ENCODE measurements at regions of chr3 and their contacts with region 1.

Region 1: GRCh38 chr3:16290007-16290826 is 25.2 kb downstream of the OXNAD1 start:
- DNase-seq: peak; percentile 58 to 67 (median 64)
- H3K4me3 ChIP-seq: peak overlapping the region; percentile 68 to 89
- H3K4me3 Mint-ChIP-seq: peak overlapping the region; percentile 93 to 99 (median 98)
- H3K27ac ChIP-seq: peak overlapping the region; percentile 76
- H3K27ac Mint-ChIP-seq: peak overlapping the region; percentile 90 to 99 (median 96)
- H3K4me1 ChIP-seq: peaks cover 78% of the 10 kb centered on the region
- H3K4me1 Mint-ChIP-seq: peaks cover 48 to 82% (median 72%) of the 10 kb centered on the region in 4 donors
- H3K27me3 ChIP-seq: no peaks in the 10 kb centered on the region
- H3K27me3 Mint-ChIP-seq: no peaks in the 10 kb centered on the region

Region 2: GRCh38 chr3:16270855-16271254 is 19.4 kb before region 1 on chr3:
- CTCF ChIA-PET with region 1: interaction called, 72 read pairs
- POLR2A ChIA-PET with region 1: interaction called, 67 read pairs
- intact Hi-C with region 1: loop called (anchors 1 kb)
- DNase-seq: no peak
- H3K4me3 ChIP-seq: no peak overlapping the region
- H3K4me3 Mint-ChIP-seq: no peak overlapping the region
- H3K27ac ChIP-seq: no peak overlapping the region
- H3K27ac Mint-ChIP-seq: no peak overlapping the region
- H3K4me1 ChIP-seq: peaks cover 18% of the 10 kb centered on the region
- H3K4me1 Mint-ChIP-seq: peaks cover 12 to 18% (median 16%) of the 10 kb centered on the region in 4 donors
- H3K27me3 ChIP-seq: no peaks in the 10 kb centered on the region
- H3K27me3 Mint-ChIP-seq: no peaks in the 10 kb centered on the region

Region 3: DNA sequence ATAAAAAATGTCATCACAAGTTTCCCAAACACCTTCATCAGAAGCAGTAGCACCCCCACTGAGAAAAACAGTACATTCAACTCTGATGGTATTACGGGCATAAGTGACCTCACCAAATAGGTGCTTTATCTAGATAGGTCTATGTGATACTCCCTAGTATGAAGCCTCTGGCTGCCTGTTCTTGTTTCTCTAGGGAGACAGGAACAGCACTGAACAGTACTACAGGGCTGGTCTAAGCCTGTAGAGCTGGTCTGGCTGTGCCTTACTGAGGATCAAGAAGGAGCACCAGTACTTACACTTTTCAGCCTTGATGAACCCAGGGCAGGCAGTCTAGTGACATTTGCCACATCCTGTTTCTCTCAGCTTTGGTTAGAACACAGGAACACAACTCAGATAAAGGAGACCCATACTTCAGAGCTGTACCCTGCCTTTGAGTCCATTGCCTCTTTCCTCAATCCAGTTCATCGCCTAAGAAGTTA is 10.7 kb after region 1 on chr3:
- CTCF ChIA-PET with region 1: interaction called, 102 read pairs
- POLR2A ChIA-PET with region 1: interaction called, 254 read pairs
- intact Hi-C with region 1: loop called (anchors 1 kb)
- DNase-seq: peak; percentile 76 to 81 (median 77)
- H3K4me3 ChIP-seq: peak overlapping the region in 1 of 2 donors; percentile 50
- H3K4me3 Mint-ChIP-seq: peak overlapping the region; percentile 89 to 96 (median 90)
- H3K27ac ChIP-seq: peak overlapping the region; percentile 49
- H3K27ac Mint-ChIP-seq: peak overlapping the region; percentile 93 to 98 (median 96)
- H3K4me1 ChIP-seq: peaks cover 95% of the 10 kb centered on the region
- H3K4me1 Mint-ChIP-seq: peaks cover 81 to 99% (median 92%) of the 10 kb centered on the region in 4 donors
- H3K27me3 ChIP-seq: no peaks in the 10 kb centered on the region
- H3K27me3 Mint-ChIP-seq: no peaks in the 10 kb centered on the region

Region 4: DNA sequence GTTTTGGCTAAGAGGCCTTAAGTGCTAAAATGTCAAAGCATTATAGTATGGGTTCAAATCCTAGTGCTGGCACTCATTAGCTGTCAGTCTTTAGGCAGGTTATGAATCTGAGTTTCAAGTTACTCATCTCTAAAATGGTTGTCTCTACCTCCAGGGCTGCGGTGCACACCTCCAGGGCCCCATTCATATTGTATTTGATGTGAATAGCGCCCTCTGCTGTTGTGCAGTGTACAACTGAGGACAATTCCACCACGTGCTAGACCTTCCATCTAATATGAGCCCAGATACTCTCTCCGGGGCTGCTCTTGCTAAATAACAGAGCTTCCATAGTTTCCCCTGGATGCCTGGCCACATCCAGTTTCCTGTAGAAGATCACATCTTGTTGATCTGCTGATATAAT is 29.1 kb after region 1 on chr3:
- CTCF ChIA-PET with region 1: interaction called, 488 read pairs
- POLR2A ChIA-PET with region 1: interaction called, 361 read pairs
- intact Hi-C with region 1: loop called (anchors 1 kb)
- DNase-seq: peak; percentile 79 to 89 (median 81)
- H3K4me3 ChIP-seq: no peak overlapping the region
- H3K4me3 Mint-ChIP-seq: peak overlapping the region in 6 of 8 donors; percentile 17 to 80 (median 36)
- H3K27ac ChIP-seq: peak overlapping the region; percentile 31
- H3K27ac Mint-ChIP-seq: peak overlapping the region; percentile 87 to 95 (median 93)
- H3K4me1 ChIP-seq: peaks cover 61% of the 10 kb centered on the region
- H3K4me1 Mint-ChIP-seq: peaks cover 53 to 79% (median 63%) of the 10 kb centered on the region in 4 donors
- H3K27me3 ChIP-seq: no peaks in the 10 kb centered on the region
- H3K27me3 Mint-ChIP-seq: no peaks in the 10 kb centered on the region

Region 5: DNA sequence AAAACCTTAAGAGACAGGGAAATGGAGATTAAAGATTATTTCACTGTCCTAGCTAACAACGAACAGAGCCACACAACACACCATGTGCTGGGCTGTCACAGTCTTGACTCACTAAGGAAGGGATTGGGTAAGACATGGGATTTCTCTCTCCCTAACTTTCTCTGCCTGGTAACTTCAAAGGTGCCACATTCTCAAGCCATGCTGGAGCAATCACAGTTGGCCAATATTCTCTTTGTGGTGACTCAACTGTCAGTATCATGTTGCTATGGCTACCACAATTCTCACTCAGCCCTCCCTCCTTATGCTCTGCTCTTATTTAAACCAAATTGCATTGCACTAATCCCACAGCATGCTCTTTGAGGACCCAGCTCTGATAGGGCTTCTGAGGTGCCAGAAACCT is 48.8 kb after region 1 on chr3:
- CTCF ChIA-PET with region 1: interaction called, 27 read pairs
- POLR2A ChIA-PET with region 1: interaction called, 16 read pairs
- intact Hi-C with region 1: no loop called
- DNase-seq: peak; percentile 22 to 60 (median 28)
- H3K4me3 ChIP-seq: no peak overlapping the region
- H3K4me3 Mint-ChIP-seq: peak overlapping the region in 4 of 8 donors; percentile 58 to 71 (median 62)
- H3K27ac ChIP-seq: peak overlapping the region; percentile 23
- H3K27ac Mint-ChIP-seq: peak overlapping the region; percentile 71 to 94 (median 86)
- H3K4me1 ChIP-seq: peaks cover 48% of the 10 kb centered on the region
- H3K4me1 Mint-ChIP-seq: peaks cover 44 to 81% (median 63%) of the 10 kb centered on the region in 4 donors
- H3K27me3 ChIP-seq: no peaks in the 10 kb centered on the region
- H3K27me3 Mint-ChIP-seq: no peaks in the 10 kb centered on the region

Region 6: GRCh38 chr3:16511681-16512434 is 221.6 kb after region 1 on chr3:
- CTCF ChIA-PET with region 1: interaction called, 15 read pairs
- POLR2A ChIA-PET with region 1: interaction called, 34 read pairs
- intact Hi-C with region 1: loop called (anchors 1 kb)
- DNase-seq: peak; percentile 81 to 92 (median 85)
- H3K4me3 ChIP-seq: peak overlapping the region; percentile 70 to 80
- H3K4me3 Mint-ChIP-seq: peak overlapping the region; percentile 91 to 98 (median 96)
- H3K27ac ChIP-seq: peak overlapping the region; percentile 73
- H3K27ac Mint-ChIP-seq: peak overlapping the region; percentile 93 to 98 (median 96)
- H3K4me1 ChIP-seq: peaks cover 86% of the 10 kb centered on the region
- H3K4me1 Mint-ChIP-seq: peaks cover 57 to 89% (median 73%) of the 10 kb centered on the region in 4 donors
- H3K27me3 ChIP-seq: no peaks in the 10 kb centered on the region
- H3K27me3 Mint-ChIP-seq: no peaks in the 10 kb centered on the region

Region 7: GRCh38 chr3:16550676-16551341 is 260.6 kb after region 1 on chr3:
- CTCF ChIA-PET with region 1: interaction called, 33 read pairs
- POLR2A ChIA-PET with region 1: interaction called, 5 read pairs
- intact Hi-C with region 1: loop called (anchors 1 kb)
- DNase-seq: peak; percentile 74 to 80 (median 78)
- H3K4me3 ChIP-seq: no peak overlapping the region
- H3K4me3 Mint-ChIP-seq: no peak overlapping the region
- H3K27ac ChIP-seq: no peak overlapping the region
- H3K27ac Mint-ChIP-seq: peak overlapping the region in 5 of 7 donors; percentile 11 to 84 (median 51)
- H3K4me1 ChIP-seq: no peaks in the 10 kb centered on the region
- H3K4me1 Mint-ChIP-seq: peaks cover 2 to 6% (median 3%) of the 10 kb centered on the region in 4 donors
- H3K27me3 ChIP-seq: no peaks in the 10 kb centered on the region
- H3K27me3 Mint-ChIP-seq: peaks cover 6 to 14% of the 10 kb centered on the region in 2 donors

Measured in CD4-positive, alpha-beta memory T cell (primary cell).